GM12878 (cell line): ENCODE measurements at regions of chr21 and their contacts with region 1.

Region 1: GRCh38 chr21:34351786-34352241 is 12.0 kb upstream of the KCNE2 start:
- DNase-seq: peak; percentile 28
- ATAC-seq: peak; percentile 96
- H3K4me3 ChIP-seq: no peak overlapping the region
- H3K27ac ChIP-seq: no peak overlapping the region
- H3K4me1 ChIP-seq: no peaks in the 10 kb centered on the region
- H3K27me3 ChIP-seq: no peaks in the 10 kb centered on the region; a peak in 1 of 4 replicates
- CTCF ChIP-seq: peak; percentile 64 to 88 (median 69)
- EP300 ChIP-seq: no peak
- POLR2A ChIP-seq: no peak
- RAD21 ChIP-seq: peak; percentile 83

Region 2: DNA sequence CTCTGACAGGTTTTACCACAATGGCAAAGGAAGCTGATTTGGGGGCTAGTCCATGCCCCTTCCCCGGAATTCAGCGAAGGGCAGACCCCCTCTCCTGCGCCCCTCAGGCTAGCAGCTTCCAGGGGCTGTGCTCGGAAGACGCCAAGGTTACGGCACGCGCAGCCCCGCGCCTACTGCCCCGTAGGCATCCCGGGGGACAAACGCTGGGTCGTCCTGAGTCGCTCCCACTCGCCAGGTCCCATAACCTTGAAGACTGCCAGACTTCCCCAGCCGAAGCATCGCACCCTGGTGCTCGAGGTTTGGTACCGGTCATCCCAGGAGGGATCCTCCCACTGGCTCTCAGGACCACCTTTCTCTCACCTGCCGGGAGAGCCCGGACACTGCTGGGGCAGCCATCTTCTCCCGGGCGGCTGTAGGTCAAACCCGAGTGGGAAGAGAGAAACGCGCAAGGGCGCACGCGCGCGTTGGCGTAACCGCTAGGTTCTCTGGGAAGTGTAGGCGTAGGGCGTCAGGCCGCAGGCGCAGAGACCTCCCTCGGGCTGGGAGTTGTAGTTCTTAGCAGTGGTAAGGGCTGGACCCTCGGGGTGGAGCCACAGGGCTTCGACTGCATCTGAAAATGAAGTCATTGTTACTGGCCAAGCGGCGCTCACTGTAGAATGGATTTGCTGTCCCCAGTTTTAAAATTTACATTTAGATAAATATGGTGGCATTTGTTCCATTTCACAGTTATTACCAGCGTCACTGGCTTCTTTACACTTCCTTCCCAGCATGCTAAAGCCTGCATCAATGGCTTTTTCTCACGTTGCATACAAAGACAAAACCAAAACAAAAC is 436.2 kb before region 1 on chr21 and contains the start of gene ATP5PO:
- CTCF ChIA-PET with region 1: interaction called, 20 read pairs
- POLR2A ChIA-PET with region 1: no interaction called
- RAD21 ChIA-PET with region 1: interaction called, 241 read pairs
- SMC1A ChIA-PET with region 1: interaction called, 14 read pairs
- in situ Hi-C with region 1: loop called (anchors 5 kb)
- intact Hi-C with region 1: no loop called
- DNase-seq: peak; percentile 96
- ATAC-seq: peak; percentile 99
- H3K4me3 ChIP-seq: peak within 1 kb of the TSS; percentile 87
- H3K27ac ChIP-seq: peak within 1 kb of the TSS; percentile 95
- H3K4me1 ChIP-seq: peaks cover 4% of the 10 kb centered on the region; the same call in 1 of the 2 replicates
- H3K27me3 ChIP-seq: no peaks in the 10 kb centered on the region
- CTCF ChIP-seq: no peak
- EP300 ChIP-seq: no peak
- POLR2A ChIP-seq: peak; percentile 97
- RAD21 ChIP-seq: no peak
- polyA plus RNA-seq, gene ATP5PO: 1,461 to 1,656 TPM

Region 3: GRCh38 chr21:34333150-34333739 is 18.6 kb before region 1 on chr21:
- CTCF ChIA-PET with region 1: interaction called, 18 read pairs
- POLR2A ChIA-PET with region 1: no interaction called
- RAD21 ChIA-PET with region 1: no interaction called
- SMC1A ChIA-PET with region 1: no interaction called
- in situ Hi-C with region 1: no loop called
- intact Hi-C with region 1: no loop called
- DNase-seq: no peak
- ATAC-seq: no peak
- H3K4me3 ChIP-seq: no peak overlapping the region
- H3K27ac ChIP-seq: no peak overlapping the region
- H3K4me1 ChIP-seq: no peaks in the 10 kb centered on the region
- H3K27me3 ChIP-seq: no peaks in the 10 kb centered on the region; a peak in 1 of 4 replicates
- CTCF ChIP-seq: no peak
- EP300 ChIP-seq: no peak
- POLR2A ChIP-seq: no peak
- RAD21 ChIP-seq: no peak

Region 4: GRCh38 chr21:34362136-34362444 is 10.3 kb after region 1 on chr21:
- CTCF ChIA-PET with region 1: interaction called, 25 read pairs
- POLR2A ChIA-PET with region 1: no interaction called
- RAD21 ChIA-PET with region 1: interaction called, 3 read pairs
- SMC1A ChIA-PET with region 1: interaction called, 5 read pairs
- in situ Hi-C with region 1: no loop called
- intact Hi-C with region 1: no loop called
- DNase-seq: no peak
- ATAC-seq: peak; percentile 24; the same call in 2 of the 3 replicates
- H3K4me3 ChIP-seq: no peak overlapping the region
- H3K27ac ChIP-seq: no peak overlapping the region
- H3K4me1 ChIP-seq: no peaks in the 10 kb centered on the region
- H3K27me3 ChIP-seq: peaks cover 0 to 3% of the 10 kb centered on the region in 2 experiments; a peak in 1 of 4 replicates
- CTCF ChIP-seq: no peak
- EP300 ChIP-seq: no peak
- POLR2A ChIP-seq: no peak
- RAD21 ChIP-seq: no peak

Region 5: DNA sequence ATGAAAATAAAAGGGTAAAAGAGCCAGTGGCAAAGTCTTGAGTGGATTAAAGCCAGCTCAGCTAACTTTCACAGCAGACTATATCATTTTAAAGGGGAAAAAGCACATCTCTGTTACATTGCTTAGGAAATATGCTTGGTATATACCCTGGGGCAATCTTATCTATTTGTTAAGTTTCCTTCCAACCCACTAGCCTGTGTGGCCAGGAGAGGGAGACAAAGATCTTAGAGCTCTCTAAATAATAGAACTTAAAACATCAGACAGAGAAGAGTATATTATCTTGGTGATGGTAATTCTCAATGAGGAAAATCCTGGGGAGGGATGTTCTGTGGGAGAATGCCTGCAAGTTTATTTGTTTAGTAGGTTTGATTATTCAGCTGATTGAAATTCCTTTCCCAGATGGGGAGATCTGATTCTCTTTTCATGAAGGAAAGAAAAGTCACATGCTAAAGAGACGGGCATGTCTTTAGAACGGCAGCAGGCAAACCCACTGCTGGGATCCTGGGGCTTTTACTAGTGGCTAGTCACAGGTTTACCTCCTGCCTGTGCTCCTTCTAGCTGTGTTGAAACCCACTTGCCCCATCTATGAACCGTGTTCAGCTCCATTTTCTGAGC is 15.6 kb after region 1 on chr21:
- CTCF ChIA-PET with region 1: interaction called, 25 read pairs
- POLR2A ChIA-PET with region 1: no interaction called
- RAD21 ChIA-PET with region 1: no interaction called
- SMC1A ChIA-PET with region 1: interaction called, 5 read pairs
- in situ Hi-C with region 1: no loop called
- intact Hi-C with region 1: no loop called
- DNase-seq: no peak
- ATAC-seq: peak; percentile 91
- H3K4me3 ChIP-seq: no peak overlapping the region
- H3K27ac ChIP-seq: no peak overlapping the region
- H3K4me1 ChIP-seq: no peaks in the 10 kb centered on the region
- H3K27me3 ChIP-seq: no peaks in the 10 kb centered on the region
- CTCF ChIP-seq: peak; percentile 69 to 73 (median 72)
- EP300 ChIP-seq: no peak
- POLR2A ChIP-seq: no peak
- RAD21 ChIP-seq: peak; percentile 70

Region 6: GRCh38 chr21:34782506-34783365 is 430.9 kb after region 1 on chr21:
- CTCF ChIA-PET with region 1: no interaction called
- POLR2A ChIA-PET with region 1: no interaction called
- RAD21 ChIA-PET with region 1: no interaction called
- SMC1A ChIA-PET with region 1: no interaction called
- in situ Hi-C with region 1: no loop called
- intact Hi-C with region 1: no loop called
- DNase-seq: no peak
- ATAC-seq: no peak
- H3K4me3 ChIP-seq: no peak overlapping the region
- H3K27ac ChIP-seq: no peak overlapping the region
- H3K4me1 ChIP-seq: no peaks in the 10 kb centered on the region
- H3K27me3 ChIP-seq: no peaks in the 10 kb centered on the region; a peak in 2 of 4 replicates
- CTCF ChIP-seq: no peak
- EP300 ChIP-seq: no peak
- POLR2A ChIP-seq: no peak
- RAD21 ChIP-seq: no peak